Activated CD8-positive, alpha-beta T cell treated with anti-CD3 and anti-CD28 coated beads for 36 hours (primary cell): ENCODE measurements at regions of chr20 and their contacts with region 1.

Region 1: GRCh38 chr20:41697861-41698419 is 79.8 kb upstream of the CHD6 start:
- DNase-seq: peak; percentile 26
- ATAC-seq: no peak
- H3K4me3 Mint-ChIP-seq: no peak overlapping the region
- H3K27ac Mint-ChIP-seq: no peak overlapping the region
- H3K4me1 Mint-ChIP-seq: peaks cover 10% of the 10 kb centered on the region
- H3K27me3 Mint-ChIP-seq: no peaks in the 10 kb centered on the region
- CTCF ChIP-seq: peak; percentile 84

Region 2: DNA sequence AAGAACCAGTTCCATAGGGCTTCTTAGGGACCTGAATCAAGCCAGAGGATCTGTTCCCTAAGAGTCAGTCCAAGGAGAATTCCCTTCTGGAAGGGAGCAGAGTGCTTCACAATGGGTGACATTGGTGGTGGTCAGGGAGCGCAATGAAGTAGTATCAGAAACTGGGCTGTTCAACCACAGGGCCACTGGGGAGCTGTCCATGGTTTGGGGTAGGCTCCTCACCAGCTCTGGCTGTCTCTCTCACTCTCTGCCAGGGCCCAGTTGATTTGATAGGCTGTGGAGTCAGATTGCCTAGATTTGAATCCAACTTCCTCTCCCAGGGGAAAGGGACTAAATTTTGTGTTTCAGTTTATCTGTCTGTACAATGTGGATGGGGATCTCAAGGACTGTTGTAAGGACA is 43.1 kb before region 1 on chr20:
- CTCF ChIA-PET with region 1: interaction called, 5 read pairs
- POLR2A ChIA-PET with region 1: interaction called, 3 read pairs
- intact Hi-C with region 1: loop called (anchors 10 kb)
- DNase-seq: no peak
- ATAC-seq: no peak
- H3K4me3 Mint-ChIP-seq: no peak overlapping the region
- H3K27ac Mint-ChIP-seq: no peak overlapping the region
- H3K4me1 Mint-ChIP-seq: no peaks in the 10 kb centered on the region
- H3K27me3 Mint-ChIP-seq: peaks cover 10% of the 10 kb centered on the region
- CTCF ChIP-seq: no peak

Region 3: DNA sequence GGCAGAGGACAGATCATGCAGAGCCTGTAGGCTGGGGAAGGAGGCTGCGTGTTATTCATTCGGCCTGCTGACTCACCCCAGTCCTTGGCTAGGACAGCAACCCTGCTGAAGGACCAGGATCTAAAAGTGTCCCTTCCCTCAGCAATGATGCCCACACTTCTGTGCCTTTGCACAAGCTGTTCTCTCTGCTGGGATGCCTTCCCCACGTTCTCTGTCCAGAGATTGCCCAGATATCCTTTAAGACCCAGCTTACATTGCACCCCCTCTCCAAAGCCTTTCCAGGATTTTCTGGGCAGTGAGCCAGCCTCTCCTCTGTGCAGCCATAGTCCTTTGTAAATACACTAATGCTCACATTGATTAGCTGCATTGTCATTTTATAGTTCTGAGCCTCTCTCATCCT is 19.5 kb after region 1 on chr20:
- CTCF ChIA-PET with region 1: interaction called, 11 read pairs
- POLR2A ChIA-PET with region 1: interaction called, 3 read pairs
- intact Hi-C with region 1: no loop called
- DNase-seq: no peak
- ATAC-seq: no peak
- H3K4me3 Mint-ChIP-seq: no peak overlapping the region
- H3K27ac Mint-ChIP-seq: no peak overlapping the region
- H3K4me1 Mint-ChIP-seq: no peaks in the 10 kb centered on the region
- H3K27me3 Mint-ChIP-seq: peaks cover 9% of the 10 kb centered on the region
- CTCF ChIP-seq: no peak

Region 4: DNA sequence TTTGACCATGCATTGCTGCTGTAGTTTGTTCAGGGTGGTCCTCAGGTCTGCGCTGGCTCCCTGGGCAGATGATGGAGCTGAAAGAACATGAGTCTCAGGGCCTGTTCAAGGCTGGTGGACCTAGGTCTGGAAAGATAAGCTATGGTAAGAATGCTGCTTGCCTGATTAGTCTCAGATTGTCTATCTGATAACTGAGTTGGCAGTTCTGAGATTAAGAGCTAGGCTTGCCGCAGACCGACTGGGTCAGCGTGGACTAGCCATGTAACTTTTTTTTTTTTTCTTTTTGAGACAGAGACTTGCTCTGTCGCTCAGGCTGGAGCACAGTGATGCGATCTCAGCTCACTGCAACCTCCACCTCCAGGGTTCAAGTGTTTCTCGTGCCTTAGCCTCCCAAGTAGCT is 69.1 kb after region 1 on chr20:
- CTCF ChIA-PET with region 1: no interaction called
- POLR2A ChIA-PET with region 1: no interaction called
- intact Hi-C with region 1: no loop called
- DNase-seq: no peak
- ATAC-seq: no peak
- H3K4me3 Mint-ChIP-seq: no peak overlapping the region
- H3K27ac Mint-ChIP-seq: no peak overlapping the region
- H3K4me1 Mint-ChIP-seq: no peaks in the 10 kb centered on the region
- H3K27me3 Mint-ChIP-seq: peaks cover 13% of the 10 kb centered on the region
- CTCF ChIP-seq: no peak

Region 5: DNA sequence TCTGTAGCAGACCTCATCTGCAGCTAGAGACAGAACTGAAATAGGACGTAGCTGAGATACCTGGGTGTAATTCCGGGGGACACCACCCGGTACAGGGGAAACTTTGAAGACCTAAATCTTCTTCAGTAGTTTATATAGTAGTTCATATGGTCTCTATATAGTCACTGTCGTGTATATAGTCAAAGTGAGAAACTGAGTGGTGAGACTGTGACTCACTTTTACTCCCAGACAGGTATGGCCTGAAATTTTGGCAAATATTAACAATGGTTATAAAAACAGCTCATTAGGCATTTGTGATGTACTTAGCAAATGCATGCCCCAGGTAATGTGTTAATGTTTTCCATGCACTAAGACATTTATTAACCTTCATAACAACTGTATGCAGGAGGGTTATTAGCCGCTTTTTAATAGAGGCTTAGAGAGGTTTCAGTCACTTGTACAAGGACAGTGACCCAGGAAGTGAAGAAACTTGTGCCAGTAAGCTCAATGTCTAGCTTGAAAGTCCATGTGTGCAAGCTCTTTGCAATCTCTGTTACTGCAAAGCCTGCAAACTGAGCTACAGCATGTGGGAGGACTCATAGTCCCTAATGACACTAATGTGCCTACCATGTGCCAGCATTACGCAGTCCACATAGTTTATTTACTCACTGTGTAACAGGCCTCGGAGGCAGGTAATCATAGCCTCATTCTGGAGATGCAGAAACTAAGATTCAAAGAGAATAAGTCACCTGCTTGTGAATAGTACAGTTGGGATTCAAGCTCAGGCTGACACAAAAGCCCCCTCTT is 85.7 kb after region 1 on chr20:
- CTCF ChIA-PET with region 1: no interaction called
- POLR2A ChIA-PET with region 1: no interaction called
- intact Hi-C with region 1: no loop called
- DNase-seq: no peak
- ATAC-seq: no peak
- H3K4me3 Mint-ChIP-seq: no peak overlapping the region
- H3K27ac Mint-ChIP-seq: no peak overlapping the region
- H3K4me1 Mint-ChIP-seq: no peaks in the 10 kb centered on the region
- H3K27me3 Mint-ChIP-seq: peaks cover 1% of the 10 kb centered on the region
- CTCF ChIP-seq: no peak